ENCODE measurements at regions of chr9 and their contacts with region 1.

Region 1: DNA sequence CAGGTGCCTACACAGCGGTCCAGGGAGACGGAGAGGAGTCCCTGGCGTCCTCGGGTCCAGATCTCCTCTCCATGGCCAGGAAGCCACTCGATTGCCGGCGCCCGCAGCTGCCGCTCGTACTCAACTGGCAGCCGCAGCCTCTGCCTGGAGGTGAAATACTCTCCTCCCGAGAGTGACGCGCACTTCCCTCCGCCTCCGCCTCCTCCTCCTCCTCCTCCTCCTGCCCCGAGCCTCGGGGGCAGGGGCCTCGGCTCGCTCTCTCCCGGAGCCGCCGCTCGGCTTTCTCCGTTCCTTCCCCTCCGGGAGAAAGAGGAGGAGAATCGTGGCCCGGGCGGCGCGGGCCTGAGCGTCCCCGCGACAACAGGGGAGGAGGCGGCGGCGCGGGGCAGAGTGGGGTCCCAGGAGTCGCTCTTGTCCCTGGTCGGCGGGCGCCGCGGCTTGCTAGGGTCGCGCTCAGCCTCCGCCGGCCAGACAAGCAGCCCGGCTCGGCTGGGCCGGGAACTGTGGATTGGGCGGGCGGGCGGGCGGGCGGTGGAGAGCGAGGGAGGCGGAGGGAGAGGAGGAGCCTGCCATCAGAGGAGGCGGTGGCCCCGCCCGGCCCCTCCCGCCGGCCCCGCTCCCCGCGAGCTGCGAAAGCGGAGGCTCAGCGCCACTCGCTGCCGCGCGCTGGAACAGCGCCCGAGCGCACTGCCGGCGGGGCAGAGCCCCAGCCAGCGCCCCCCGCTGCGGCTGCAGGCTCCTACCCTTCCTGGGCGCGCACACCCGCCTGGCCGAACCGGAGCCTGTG is at the start of gene CEMIP2:
- DNase-seq: peak; percentile 84
- H3K4me3 Mint-ChIP-seq: peak within 1 kb of the TSS; percentile 96
- H3K27ac Mint-ChIP-seq: peak within 1 kb of the TSS; percentile 92
- H3K4me1 Mint-ChIP-seq: peaks cover 48% of the 10 kb centered on the region
- H3K27me3 Mint-ChIP-seq: no peaks in the 10 kb centered on the region
- total RNA-seq, gene CEMIP2: 70.0 and 79.1 TPM in 2 replicates

Region 2: GRCh38 chr9:71285191-71285656 is 483.4 kb before region 1 on chr9:
- intact Hi-C with region 1: loop called (anchors 2 kb)
- DNase-seq: peak; percentile 10
- H3K4me3 Mint-ChIP-seq: no peak overlapping the region
- H3K27ac Mint-ChIP-seq: no peak overlapping the region
- H3K4me1 Mint-ChIP-seq: no peaks in the 10 kb centered on the region
- H3K27me3 Mint-ChIP-seq: peaks cover 3% of the 10 kb centered on the region

Region 3: GRCh38 chr9:71628247-71628646 is 140.3 kb before region 1 on chr9:
- intact Hi-C with region 1: loop called (anchors 1 kb)
- DNase-seq: no peak
- H3K4me3 Mint-ChIP-seq: no peak overlapping the region
- H3K27ac Mint-ChIP-seq: no peak overlapping the region
- H3K4me1 Mint-ChIP-seq: peaks cover 45% of the 10 kb centered on the region
- H3K27me3 Mint-ChIP-seq: peaks cover 19% of the 10 kb centered on the region

Region 4: GRCh38 chr9:71716138-71716909 is 52.3 kb before region 1 on chr9:
- intact Hi-C with region 1: loop called (anchors 2 kb)
- DNase-seq: no peak
- H3K4me3 Mint-ChIP-seq: no peak overlapping the region
- H3K27ac Mint-ChIP-seq: no peak overlapping the region
- H3K4me1 Mint-ChIP-seq: peaks cover 5% of the 10 kb centered on the region
- H3K27me3 Mint-ChIP-seq: no peaks in the 10 kb centered on the region

Region 5: DNA sequence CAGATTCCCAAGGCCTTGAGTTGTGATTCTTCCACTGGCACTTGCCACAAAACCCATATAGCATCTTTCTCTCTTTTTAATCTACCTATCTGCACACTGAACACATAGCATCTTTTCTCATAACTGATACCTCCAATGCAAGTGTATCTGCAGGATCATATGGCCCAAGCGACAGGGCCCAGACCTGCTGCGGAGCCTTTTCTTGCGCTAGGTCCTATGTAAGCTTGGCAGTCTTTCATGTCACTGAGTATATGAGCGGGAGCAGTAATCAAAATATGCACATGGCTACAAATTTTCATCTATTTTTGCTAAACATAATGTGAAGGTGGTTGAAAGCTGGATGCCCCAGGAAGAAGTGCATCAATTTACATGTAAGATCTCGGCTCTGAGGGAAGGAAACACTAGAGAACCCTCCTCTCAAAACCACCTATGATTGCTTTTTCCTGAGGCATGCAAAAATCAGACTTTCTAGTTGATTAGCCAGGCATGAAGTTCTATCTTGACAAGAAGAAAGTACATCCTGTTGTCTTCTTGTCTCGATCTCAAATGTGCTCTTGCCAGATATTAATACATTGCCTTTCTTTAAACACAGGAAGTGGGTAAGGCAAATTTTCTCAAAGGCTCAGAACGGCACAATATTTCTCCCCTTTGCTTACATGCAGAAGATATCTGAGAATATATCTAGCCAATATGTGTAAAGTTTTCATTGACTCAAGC is 26.7 kb after region 1 on chr9:
- intact Hi-C with region 1: loop called (anchors 1 kb)
- DNase-seq: no peak
- H3K4me3 Mint-ChIP-seq: peak overlapping the region; percentile 57
- H3K27ac Mint-ChIP-seq: peak overlapping the region; percentile 88
- H3K4me1 Mint-ChIP-seq: peaks cover 32% of the 10 kb centered on the region
- H3K27me3 Mint-ChIP-seq: no peaks in the 10 kb centered on the region

Region 6: DNA sequence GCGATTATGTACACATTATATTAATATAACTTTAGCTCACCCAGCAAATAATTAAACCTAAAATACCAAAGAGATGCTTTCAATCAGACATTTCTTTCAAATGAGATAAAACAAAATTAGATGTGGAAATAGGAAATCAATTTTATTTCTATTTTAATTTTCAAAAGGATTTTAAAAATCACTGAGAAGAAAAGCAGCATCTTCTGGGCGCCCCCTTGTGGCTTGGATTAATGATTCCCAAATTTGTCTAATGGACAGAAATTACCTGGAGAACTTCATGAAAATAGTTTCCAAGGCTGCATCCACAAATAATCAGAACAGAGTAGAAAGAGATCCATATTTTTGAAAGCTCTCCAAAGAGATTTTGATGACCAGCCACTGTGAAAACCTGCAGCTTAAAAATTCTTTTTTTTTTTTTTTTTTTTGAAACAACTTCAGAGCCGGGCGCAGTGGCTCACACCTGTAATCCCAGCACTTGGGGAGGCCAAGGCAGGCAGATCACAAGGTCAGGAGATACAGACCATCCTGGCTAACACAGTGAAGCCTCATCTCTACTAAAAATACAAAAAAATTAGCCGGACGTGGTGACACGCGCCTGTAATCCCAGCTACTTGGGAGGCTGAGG is 50.6 kb after region 1 on chr9:
- intact Hi-C with region 1: no loop called
- DNase-seq: no peak
- H3K4me3 Mint-ChIP-seq: no peak overlapping the region
- H3K27ac Mint-ChIP-seq: no peak overlapping the region
- H3K4me1 Mint-ChIP-seq: peaks cover 17% of the 10 kb centered on the region
- H3K27me3 Mint-ChIP-seq: peaks cover 2% of the 10 kb centered on the region

Region 7: GRCh38 chr9:72526901-72527800 is 758.6 kb after region 1 on chr9:
- intact Hi-C with region 1: loop called (anchors 1 kb)
- DNase-seq: peak; percentile 75
- H3K4me3 Mint-ChIP-seq: peak overlapping the region; percentile 69
- H3K27ac Mint-ChIP-seq: peak overlapping the region; percentile 95
- H3K4me1 Mint-ChIP-seq: peaks cover 66% of the 10 kb centered on the region
- H3K27me3 Mint-ChIP-seq: no peaks in the 10 kb centered on the region

Region 8: DNA sequence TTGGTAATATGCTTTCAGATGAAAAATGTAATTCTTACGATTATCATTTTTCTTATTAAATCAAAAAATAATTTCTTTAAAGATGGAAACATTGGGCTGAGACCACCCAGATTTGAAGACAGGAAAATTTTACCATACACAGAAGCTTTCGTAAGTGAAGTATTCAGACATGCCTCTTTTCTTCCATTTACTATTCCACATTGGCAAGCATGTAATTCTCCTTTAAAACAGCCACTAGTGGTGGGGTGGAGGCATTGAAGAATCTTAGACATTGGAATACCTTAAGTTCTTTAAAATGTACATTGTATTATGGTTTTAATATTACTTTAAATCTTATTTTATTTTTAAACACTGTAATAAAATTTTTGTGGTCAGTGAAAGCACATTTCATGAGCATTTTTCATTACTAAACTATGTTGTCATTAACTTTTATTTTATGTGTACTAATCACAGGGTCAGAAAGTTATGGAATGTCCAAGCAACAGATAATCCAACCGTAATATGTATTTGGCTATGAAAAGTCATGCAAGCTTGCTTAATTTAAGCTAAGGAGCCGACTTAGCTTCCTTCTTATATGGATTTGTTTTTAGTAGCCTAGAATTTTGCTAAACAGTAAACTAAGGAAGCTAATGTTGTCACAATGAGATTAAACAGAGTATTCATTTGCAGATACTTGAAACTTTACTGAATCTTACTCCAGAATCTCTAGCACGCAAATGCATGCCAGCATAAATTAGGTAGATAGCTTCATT is 1281.7 kb after region 1 on chr9:
- intact Hi-C with region 1: no loop called
- DNase-seq: no peak
- H3K4me3 Mint-ChIP-seq: no peak overlapping the region
- H3K27ac Mint-ChIP-seq: no peak overlapping the region
- H3K4me1 Mint-ChIP-seq: no peaks in the 10 kb centered on the region
- H3K27me3 Mint-ChIP-seq: no peaks in the 10 kb centered on the region